ENCODE measurements at regions of chr2 and their contacts with region 1.

Region 1: GRCh38 chr2:174593574-174594203 is 3.9 kb downstream of the WIPF1 start:
- DNase-seq: peak; percentile 79
- H3K4me3 Mint-ChIP-seq: peak overlapping the region; percentile 86
- H3K27ac Mint-ChIP-seq: peak overlapping the region; percentile 96
- H3K4me1 Mint-ChIP-seq: peaks cover 55% of the 10 kb centered on the region
- H3K27me3 Mint-ChIP-seq: no peaks in the 10 kb centered on the region

Region 2: GRCh38 chr2:174300089-174300488 is 293.6 kb before region 1 on chr2:
- CTCF ChIA-PET with region 1: no interaction called
- POLR2A ChIA-PET with region 1: no interaction called
- DNase-seq: no peak
- H3K4me3 Mint-ChIP-seq: no peak overlapping the region
- H3K27ac Mint-ChIP-seq: no peak overlapping the region
- H3K4me1 Mint-ChIP-seq: no peaks in the 10 kb centered on the region
- H3K27me3 Mint-ChIP-seq: peaks cover 27% of the 10 kb centered on the region

Region 3: GRCh38 chr2:174487108-174487819 is 106.4 kb before region 1 on chr2:
- CTCF ChIA-PET with region 1: interaction called, 4 read pairs
- POLR2A ChIA-PET with region 1: interaction called, 68 read pairs
- DNase-seq: peak; percentile 99
- H3K4me3 Mint-ChIP-seq: peak overlapping the region; percentile 85
- H3K27ac Mint-ChIP-seq: peak overlapping the region; percentile 57
- H3K4me1 Mint-ChIP-seq: peaks cover 64% of the 10 kb centered on the region
- H3K27me3 Mint-ChIP-seq: no peaks in the 10 kb centered on the region

Region 4: GRCh38 chr2:174553811-174554493 is 39.7 kb before region 1 on chr2:
- CTCF ChIA-PET with region 1: no interaction called
- POLR2A ChIA-PET with region 1: interaction called, 10 read pairs
- DNase-seq: peak; percentile 57
- H3K4me3 Mint-ChIP-seq: peak overlapping the region; percentile 25
- H3K27ac Mint-ChIP-seq: peak overlapping the region; percentile 77
- H3K4me1 Mint-ChIP-seq: peaks cover 43% of the 10 kb centered on the region
- H3K27me3 Mint-ChIP-seq: no peaks in the 10 kb centered on the region

Region 5: DNA sequence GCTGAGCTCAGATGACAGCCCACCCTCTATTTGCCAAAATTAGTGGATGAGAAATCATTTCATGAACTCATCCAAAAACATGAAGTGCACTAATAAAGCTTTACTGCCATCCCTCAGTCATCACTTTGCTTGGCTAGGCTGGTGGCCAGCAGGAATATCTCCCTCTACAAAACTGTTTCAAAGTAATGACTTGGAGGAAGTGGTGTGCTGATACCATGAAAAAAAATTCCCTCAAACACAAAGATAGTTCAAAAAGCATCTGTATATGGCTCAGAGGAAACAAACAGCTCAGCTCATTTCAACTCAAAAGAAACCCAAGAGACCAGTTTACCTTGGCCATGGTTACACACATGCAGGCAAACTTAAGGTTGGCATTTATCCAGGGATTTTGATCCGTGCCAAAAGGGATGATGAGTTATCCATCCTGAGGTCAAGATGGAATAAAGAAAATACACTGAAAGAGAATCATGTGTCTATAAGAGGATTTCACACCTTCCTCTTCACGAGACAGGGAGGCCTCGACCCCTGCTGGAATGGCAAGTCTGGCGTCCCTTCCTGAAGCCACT is 22.3 kb after region 1 on chr2:
- CTCF ChIA-PET with region 1: interaction called, 10 read pairs
- POLR2A ChIA-PET with region 1: interaction called, 444 read pairs
- DNase-seq: no peak
- H3K4me3 Mint-ChIP-seq: peak overlapping the region; percentile 25
- H3K27ac Mint-ChIP-seq: peak overlapping the region; percentile 90
- H3K4me1 Mint-ChIP-seq: peaks cover 90% of the 10 kb centered on the region
- H3K27me3 Mint-ChIP-seq: no peaks in the 10 kb centered on the region

Region 6: DNA sequence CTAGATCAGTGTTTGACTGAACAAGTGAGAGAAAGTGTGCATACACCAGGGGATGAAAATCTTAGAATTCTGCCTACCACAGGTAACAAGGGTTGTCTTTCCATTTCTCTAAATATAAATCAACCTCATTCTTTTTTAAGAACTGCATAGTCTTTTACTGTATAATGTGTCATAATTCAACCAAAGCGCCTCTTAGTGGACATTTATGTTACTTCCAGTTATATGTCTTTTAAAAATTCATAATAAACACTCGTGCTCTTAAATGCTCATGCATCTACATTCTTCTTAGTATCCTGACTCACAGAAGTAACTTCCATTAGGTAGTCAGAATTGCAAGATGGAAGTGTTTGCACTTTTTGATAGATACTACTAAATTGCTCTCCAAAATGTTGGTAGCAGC is 94.4 kb after region 1 on chr2:
- CTCF ChIA-PET with region 1: interaction called, 162 read pairs
- POLR2A ChIA-PET with region 1: interaction called, 117 read pairs
- DNase-seq: no peak
- H3K4me3 Mint-ChIP-seq: no peak overlapping the region
- H3K27ac Mint-ChIP-seq: no peak overlapping the region
- H3K4me1 Mint-ChIP-seq: peaks cover 36% of the 10 kb centered on the region
- H3K27me3 Mint-ChIP-seq: no peaks in the 10 kb centered on the region